Caco-2 (cell line): ENCODE measurements at regions of chr19 and their contacts with region 1.

Region 1: GRCh38 chr19:49570138-49570856 is 10.1 kb downstream of the NOSIP start:
- DNase-seq: peak; percentile 75 to 84
- H3K4me3 ChIP-seq: no peak overlapping the region
- H3K4me3 Mint-ChIP-seq: no peak overlapping the region
- H3K27ac Mint-ChIP-seq: peak overlapping the region; percentile 2
- H3K4me1 ChIP-seq: peaks cover 5% of the 10 kb centered on the region; the same call in 1 of the 2 replicates
- H3K4me1 Mint-ChIP-seq: peaks cover 17% of the 10 kb centered on the region
- H3K27me3 ChIP-seq: no peaks in the 10 kb centered on the region
- H3K27me3 Mint-ChIP-seq: no peaks in the 10 kb centered on the region
- CTCF ChIP-seq: peak; percentile 98 to 99

Region 2: GRCh38 chr19:49497047-49497788 is 73.1 kb before region 1 on chr19:
- CTCF ChIA-PET with region 1: interaction called, 27 read pairs
- POLR2A ChIA-PET with region 1: interaction called, 12 read pairs
- intact Hi-C with region 1: no loop called
- DNase-seq: peak in 1 of 2 experiments; percentile 62
- H3K4me3 ChIP-seq: peak overlapping the region; percentile 93
- H3K4me3 Mint-ChIP-seq: peak overlapping the region; percentile 98
- H3K27ac Mint-ChIP-seq: peak overlapping the region; percentile 99
- H3K4me1 ChIP-seq: peaks cover 20% of the 10 kb centered on the region
- H3K4me1 Mint-ChIP-seq: peaks cover 13% of the 10 kb centered on the region
- H3K27me3 ChIP-seq: no peaks in the 10 kb centered on the region
- H3K27me3 Mint-ChIP-seq: no peaks in the 10 kb centered on the region
- CTCF ChIP-seq: no peak

Region 3: GRCh38 chr19:49512970-49513745 is 57.1 kb before region 1 on chr19:
- CTCF ChIA-PET with region 1: interaction called, 10 read pairs
- POLR2A ChIA-PET with region 1: no interaction called
- intact Hi-C with region 1: no loop called
- DNase-seq: peak; percentile 76 to 80
- H3K4me3 ChIP-seq: peak overlapping the region; percentile 86
- H3K4me3 Mint-ChIP-seq: peak overlapping the region; percentile 100
- H3K27ac Mint-ChIP-seq: peak overlapping the region; percentile 88
- H3K4me1 ChIP-seq: peaks cover 18% of the 10 kb centered on the region
- H3K4me1 Mint-ChIP-seq: peaks cover 24% of the 10 kb centered on the region
- H3K27me3 ChIP-seq: no peaks in the 10 kb centered on the region
- H3K27me3 Mint-ChIP-seq: no peaks in the 10 kb centered on the region
- CTCF ChIP-seq: no peak

Region 4: GRCh38 chr19:49553451-49554271 is 16.6 kb before region 1 on chr19:
- CTCF ChIA-PET with region 1: interaction called, 17 read pairs
- POLR2A ChIA-PET with region 1: interaction called, 10 read pairs
- intact Hi-C with region 1: loop called (anchors 1 kb)
- DNase-seq: peak; percentile 84
- H3K4me3 ChIP-seq: peak overlapping the region; percentile 0
- H3K4me3 Mint-ChIP-seq: peak overlapping the region; percentile 75
- H3K27ac Mint-ChIP-seq: peak overlapping the region; percentile 97
- H3K4me1 ChIP-seq: peaks cover 26% of the 10 kb centered on the region
- H3K4me1 Mint-ChIP-seq: peaks cover 22% of the 10 kb centered on the region
- H3K27me3 ChIP-seq: no peaks in the 10 kb centered on the region
- H3K27me3 Mint-ChIP-seq: no peaks in the 10 kb centered on the region
- CTCF ChIP-seq: no peak